MCF 10A (cell line): ENCODE measurements at regions of chr3 and their contacts with region 1.

Region 1: GRCh38 chr3:17032407-17033034 is 147.8 kb downstream of the PLCL2 start:
- DNase-seq: peak; percentile 42
- H3K4me3 Mint-ChIP-seq: no peak overlapping the region
- H3K27ac Mint-ChIP-seq: no peak overlapping the region
- H3K4me1 Mint-ChIP-seq: peaks cover 9% of the 10 kb centered on the region
- H3K27me3 Mint-ChIP-seq: no peaks in the 10 kb centered on the region
- CTCF ChIP-seq: peak; percentile 48

Region 2: DNA sequence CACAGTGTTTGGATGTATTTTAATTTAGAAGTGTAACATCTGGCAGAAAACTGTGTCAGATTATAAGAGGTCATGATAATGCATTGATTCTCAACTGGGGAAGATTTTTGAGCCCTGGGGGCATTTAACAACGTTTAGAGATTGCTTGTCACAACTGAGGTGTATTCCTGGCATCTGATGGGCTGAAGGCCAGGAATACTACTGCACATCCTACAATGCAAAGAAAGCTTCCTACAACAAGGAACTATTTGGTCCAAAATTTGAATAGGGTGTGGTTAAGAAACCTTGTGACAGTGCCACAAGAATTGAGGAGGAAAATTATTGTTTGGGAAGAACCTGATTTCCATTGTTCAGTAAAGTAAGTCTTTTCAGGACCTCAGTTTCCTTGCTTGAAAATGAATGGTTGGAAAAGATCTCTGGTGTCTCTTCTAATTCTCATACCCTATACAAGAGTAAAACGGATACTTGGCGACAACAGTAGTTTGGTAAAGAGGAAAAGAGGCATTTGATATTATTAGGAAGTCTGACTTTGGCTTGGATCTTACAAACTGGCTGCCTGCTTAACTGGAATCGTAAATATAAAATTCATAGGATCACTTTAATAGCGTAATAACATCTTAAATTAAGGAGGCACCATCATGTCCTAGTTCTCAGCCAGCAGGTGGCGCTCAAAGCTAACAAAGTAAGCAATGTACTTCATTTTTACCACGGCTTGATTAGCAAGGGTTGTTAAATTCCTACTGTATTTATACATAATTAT is 431.6 kb before region 1 on chr3:
- CTCF ChIA-PET with region 1: interaction called, 18 read pairs
- POLR2A ChIA-PET with region 1: no interaction called
- intact Hi-C with region 1: loop called (anchors 1 kb)
- DNase-seq: peak; percentile 80
- H3K4me3 Mint-ChIP-seq: no peak overlapping the region
- H3K27ac Mint-ChIP-seq: no peak overlapping the region
- H3K4me1 Mint-ChIP-seq: no peaks in the 10 kb centered on the region
- H3K27me3 Mint-ChIP-seq: peaks cover 54% of the 10 kb centered on the region
- CTCF ChIP-seq: peak; percentile 69

Region 3: DNA sequence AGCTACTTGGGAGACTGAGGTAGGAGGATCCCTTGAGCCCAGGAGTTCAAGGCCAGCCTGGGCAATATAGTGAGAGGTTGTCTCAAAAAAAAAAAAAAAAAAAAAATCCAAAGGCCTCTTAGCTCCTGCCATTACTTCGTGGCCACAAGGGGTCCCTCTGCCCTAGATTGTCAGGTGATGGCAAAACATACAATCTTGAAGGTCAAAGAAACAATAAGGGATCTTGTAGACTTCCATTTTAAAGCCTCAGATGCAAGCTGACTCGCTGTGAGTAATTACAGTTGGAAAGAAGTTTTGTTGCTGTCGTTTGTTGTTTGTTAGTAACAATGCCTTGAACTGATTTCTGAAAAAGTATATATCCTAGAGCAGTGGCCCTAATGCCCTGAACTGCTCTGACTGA is 203.7 kb before region 1 on chr3:
- CTCF ChIA-PET with region 1: no interaction called
- POLR2A ChIA-PET with region 1: no interaction called
- intact Hi-C with region 1: loop called (anchors 10 kb)
- DNase-seq: peak; percentile 71
- H3K4me3 Mint-ChIP-seq: no peak overlapping the region
- H3K27ac Mint-ChIP-seq: peak overlapping the region; percentile 30
- H3K4me1 Mint-ChIP-seq: no peaks in the 10 kb centered on the region
- H3K27me3 Mint-ChIP-seq: peaks cover 7% of the 10 kb centered on the region
- CTCF ChIP-seq: no peak

Region 4: DNA sequence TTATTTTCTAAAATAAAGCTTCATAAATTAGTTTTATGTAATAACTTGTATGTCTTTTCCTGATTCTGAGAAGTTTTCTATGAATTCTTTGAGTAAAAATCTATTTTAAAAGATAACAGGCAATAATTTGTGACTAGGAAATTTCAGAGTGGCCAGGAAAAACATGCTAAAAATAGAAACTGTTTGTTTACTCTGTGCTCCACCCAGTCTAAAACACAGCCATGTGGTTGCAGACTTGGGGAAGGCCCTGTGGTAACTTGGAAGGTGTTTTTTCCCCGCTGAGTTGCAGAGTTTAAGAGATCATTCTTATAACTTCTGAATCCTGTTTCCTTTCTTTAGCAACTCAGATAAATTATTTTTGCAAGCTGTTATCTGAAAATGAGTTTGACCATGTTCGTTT is 125.8 kb before region 1 on chr3:
- CTCF ChIA-PET with region 1: no interaction called
- POLR2A ChIA-PET with region 1: no interaction called
- intact Hi-C with region 1: no loop called
- DNase-seq: peak; percentile 55
- H3K4me3 Mint-ChIP-seq: no peak overlapping the region
- H3K27ac Mint-ChIP-seq: no peak overlapping the region
- H3K4me1 Mint-ChIP-seq: no peaks in the 10 kb centered on the region
- H3K27me3 Mint-ChIP-seq: peaks cover 54% of the 10 kb centered on the region
- CTCF ChIP-seq: no peak

Region 5: DNA sequence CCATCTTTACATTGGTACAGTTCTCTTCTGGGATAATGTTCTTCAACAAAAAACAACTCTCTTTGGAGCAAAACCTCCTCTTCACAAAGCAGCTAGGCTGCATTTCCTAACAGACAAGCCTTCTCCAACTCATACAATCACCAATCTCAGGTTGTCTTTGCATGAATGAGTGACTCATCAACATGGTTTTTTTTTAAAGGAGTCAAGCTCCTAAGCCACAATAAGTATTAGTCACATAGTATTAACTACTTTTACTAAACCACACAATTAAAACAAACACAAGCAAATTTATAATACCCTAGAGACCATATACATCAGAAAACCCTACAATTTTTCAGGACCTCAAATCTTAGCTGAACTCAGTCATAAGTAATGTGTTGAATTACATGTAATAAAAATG is 572.5 kb after region 1 on chr3:
- CTCF ChIA-PET with region 1: no interaction called
- POLR2A ChIA-PET with region 1: no interaction called
- intact Hi-C with region 1: no loop called
- DNase-seq: peak; percentile 86
- H3K4me3 Mint-ChIP-seq: no peak overlapping the region
- H3K27ac Mint-ChIP-seq: no peak overlapping the region
- H3K4me1 Mint-ChIP-seq: peaks cover 13% of the 10 kb centered on the region
- H3K27me3 Mint-ChIP-seq: no peaks in the 10 kb centered on the region
- CTCF ChIP-seq: no peak